ENCODE measurements at regions of chr6 and their contacts with region 1.

Region 1: DNA sequence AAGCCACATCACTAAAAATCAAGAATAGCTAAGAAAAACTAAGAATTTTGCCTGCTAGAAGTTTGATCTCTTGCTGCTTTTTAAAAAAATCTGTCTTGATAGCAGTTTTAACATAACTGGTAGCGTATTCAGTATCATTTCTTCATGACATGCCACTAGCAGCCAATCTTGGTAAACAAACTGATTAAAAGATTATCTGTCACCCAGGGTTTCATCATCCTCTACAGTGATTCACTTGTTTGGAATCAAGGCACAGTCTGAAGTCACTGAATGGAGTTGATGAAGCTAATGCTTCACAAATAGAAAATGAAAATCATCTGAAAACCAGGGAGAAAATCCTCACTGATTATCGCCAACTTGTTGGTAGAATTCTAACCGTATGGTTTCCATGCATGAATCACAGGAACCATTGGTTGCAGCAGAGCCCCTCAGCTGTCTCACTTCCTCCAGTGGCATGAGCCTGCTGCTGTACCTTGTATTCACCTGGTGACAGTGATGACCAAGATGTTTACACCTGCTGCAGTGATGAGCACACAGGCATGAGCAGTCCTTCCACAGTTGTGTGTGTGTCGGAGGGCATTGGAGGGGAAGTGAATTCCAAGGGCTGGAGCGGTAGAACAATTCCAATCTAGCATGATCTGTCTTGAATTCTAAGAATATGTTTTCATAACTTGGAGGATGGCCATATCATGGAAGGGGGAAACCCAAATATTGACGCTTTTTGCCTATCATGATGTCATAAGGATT is 275.0 kb downstream of the KHDC1L start:
- DNase-seq: peak; percentile 10 to 27
- ATAC-seq: peak; percentile 93 to 97
- H3K4me3 ChIP-seq: peak overlapping the region in 2 of 4 donors; percentile 0 to 10
- H3K27ac ChIP-seq: peak overlapping the region; percentile 73 to 83 (median 80)
- H3K4me1 ChIP-seq: peaks cover 50 to 78% of the 10 kb centered on the region in 2 donors
- H3K27me3 ChIP-seq: no peaks in the 10 kb centered on the region
- CTCF ChIP-seq: no peak
- POLR2A ChIP-seq: no peak

Region 2: GRCh38 chr6:72819609-72820008 is 130.7 kb before region 1 on chr6:
- in situ Hi-C with region 1: no loop called
- intact Hi-C with region 1: loop called (anchors 5 kb)
- DNase-seq: peak; percentile 76 to 89
- ATAC-seq: peak; percentile 99 to 100
- H3K4me3 ChIP-seq: no peak overlapping the region
- H3K27ac ChIP-seq: peak overlapping the region; percentile 83 to 84 (median 83)
- H3K4me1 ChIP-seq: peaks cover 48 to 55% of the 10 kb centered on the region in 2 donors
- H3K27me3 ChIP-seq: no peaks in the 10 kb centered on the region
- CTCF ChIP-seq: no peak
- POLR2A ChIP-seq: no peak

Region 3: GRCh38 chr6:73180763-73181619 is 230.7 kb after region 1 on chr6:
- in situ Hi-C with region 1: no loop called
- intact Hi-C with region 1: no loop called
- DNase-seq: peak in 1 of 2 donors; percentile 30
- ATAC-seq: peak; percentile 91 to 95
- H3K4me3 ChIP-seq: peak overlapping the region in 3 of 4 donors; percentile 11 to 33 (median 21)
- H3K27ac ChIP-seq: peak overlapping the region in 3 of 4 donors; percentile 15 to 62 (median 44)
- H3K4me1 ChIP-seq: peaks cover 7 to 10% of the 10 kb centered on the region in 2 donors
- H3K27me3 ChIP-seq: no peaks in the 10 kb centered on the region
- CTCF ChIP-seq: peak; percentile 58 to 89 (median 76)
- POLR2A ChIP-seq: no peak

Measured in gastrocnemius medialis (tissue), 4 donors.